ENCODE measurements at regions of chr3 and their contacts with region 1.

Region 1: DNA sequence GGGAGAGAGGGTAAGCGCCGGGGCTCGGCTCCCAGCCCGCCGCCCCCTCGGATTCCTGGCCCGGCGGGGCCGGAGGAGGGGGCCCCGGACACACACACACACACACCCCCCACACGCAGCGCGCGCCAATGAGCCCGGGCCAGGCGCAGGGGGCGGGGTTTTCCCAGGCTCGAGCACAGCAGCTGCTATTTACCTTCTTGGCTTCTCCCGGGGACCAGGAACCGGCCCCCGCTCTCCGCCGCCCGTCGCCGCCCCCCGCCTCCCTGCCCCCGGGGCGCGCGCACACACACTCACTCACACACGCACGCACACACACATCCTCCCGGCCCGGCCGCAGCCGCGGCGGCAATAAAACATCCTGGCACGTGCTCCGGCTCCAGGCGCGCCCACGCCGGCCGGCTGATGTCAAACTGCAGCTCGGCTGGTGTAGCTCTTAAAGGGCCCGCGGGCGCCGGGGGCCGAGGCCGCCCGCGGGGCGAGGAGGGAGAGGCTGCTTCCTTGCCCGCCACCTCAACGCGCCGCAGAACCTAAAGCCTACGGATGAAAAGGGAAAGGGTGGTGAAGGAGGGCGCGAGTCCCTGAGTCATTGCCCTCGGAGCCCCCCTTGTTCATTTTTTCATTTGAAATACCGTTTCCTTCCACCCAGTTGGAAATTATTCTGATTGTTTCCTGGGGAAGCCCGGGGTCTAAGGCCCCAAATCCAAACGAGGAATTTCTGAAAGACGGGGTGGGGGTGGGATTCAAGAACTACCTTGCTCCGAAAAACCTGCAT is 1.0 kb upstream of the HES1 start:
- DNase-seq: peak; percentile 95
- ATAC-seq: peak; percentile 66
- H3K4me3 ChIP-seq: peak overlapping the region; percentile 59
- H3K27ac ChIP-seq: peak overlapping the region; percentile 76
- H3K4me1 ChIP-seq: peaks cover 7% of the 10 kb centered on the region
- H3K27me3 ChIP-seq: peaks cover 17% of the 10 kb centered on the region
- CTCF ChIP-seq: no peak
- POLR2A ChIP-seq: peak; percentile 69
- RAD21 ChIP-seq: no peak; the same call in none of the 2 replicates

Region 2: GRCh38 chr3:193665370-193665989 is 469.5 kb before region 1 on chr3:
- CTCF ChIA-PET with region 1: interaction called, 3 read pairs
- POLR2A ChIA-PET with region 1: no interaction called
- dilution Hi-C with region 1: no loop called
- in situ Hi-C with region 1: no loop called
- intact Hi-C with region 1: loop called (anchors 5 kb)
- DNase-seq: peak; percentile 54
- ATAC-seq: no peak
- H3K4me3 ChIP-seq: no peak overlapping the region
- H3K27ac ChIP-seq: no peak overlapping the region
- H3K4me1 ChIP-seq: no peaks in the 10 kb centered on the region
- H3K27me3 ChIP-seq: no peaks in the 10 kb centered on the region
- CTCF ChIP-seq: peak; percentile 48
- POLR2A ChIP-seq: no peak
- RAD21 ChIP-seq: peak; percentile 35; the same call in 1 of the 2 replicates

Region 3: GRCh38 chr3:193780810-193781472 is 354.0 kb before region 1 on chr3:
- CTCF ChIA-PET with region 1: interaction called, 10 read pairs
- POLR2A ChIA-PET with region 1: no interaction called
- dilution Hi-C with region 1: no loop called
- in situ Hi-C with region 1: loop called (anchors 5 kb)
- intact Hi-C with region 1: loop called (anchors 2 kb)
- DNase-seq: peak; percentile 54
- ATAC-seq: peak; percentile 92
- H3K4me3 ChIP-seq: no peak overlapping the region
- H3K27ac ChIP-seq: no peak overlapping the region
- H3K4me1 ChIP-seq: no peaks in the 10 kb centered on the region
- H3K27me3 ChIP-seq: peaks cover 50% of the 10 kb centered on the region
- CTCF ChIP-seq: peak; percentile 81
- POLR2A ChIP-seq: no peak
- RAD21 ChIP-seq: peak; percentile 86

Region 4: GRCh38 chr3:193788189-193788991 is 346.6 kb before region 1 on chr3:
- CTCF ChIA-PET with region 1: interaction called, 6 read pairs
- POLR2A ChIA-PET with region 1: no interaction called
- dilution Hi-C with region 1: no loop called
- in situ Hi-C with region 1: loop called (anchors 5 kb)
- intact Hi-C with region 1: loop called (anchors 2 kb)
- DNase-seq: peak; percentile 53
- ATAC-seq: peak; percentile 95
- H3K4me3 ChIP-seq: no peak overlapping the region
- H3K27ac ChIP-seq: no peak overlapping the region
- H3K4me1 ChIP-seq: no peaks in the 10 kb centered on the region
- H3K27me3 ChIP-seq: peaks cover 46% of the 10 kb centered on the region
- CTCF ChIP-seq: peak; percentile 76
- POLR2A ChIP-seq: no peak
- RAD21 ChIP-seq: peak; percentile 93

Region 5: GRCh38 chr3:193869221-193870201 is 265.4 kb before region 1 on chr3:
- CTCF ChIA-PET with region 1: no interaction called
- POLR2A ChIA-PET with region 1: no interaction called
- dilution Hi-C with region 1: no loop called
- in situ Hi-C with region 1: no loop called
- intact Hi-C with region 1: loop called (anchors 5 kb)
- DNase-seq: peak; percentile 91
- ATAC-seq: peak; percentile 92
- H3K4me3 ChIP-seq: no peak overlapping the region
- H3K27ac ChIP-seq: peak overlapping the region; percentile 54
- H3K4me1 ChIP-seq: peaks cover 25% of the 10 kb centered on the region
- H3K27me3 ChIP-seq: no peaks in the 10 kb centered on the region
- CTCF ChIP-seq: no peak
- POLR2A ChIP-seq: no peak
- RAD21 ChIP-seq: peak; percentile 14

Region 6: DNA sequence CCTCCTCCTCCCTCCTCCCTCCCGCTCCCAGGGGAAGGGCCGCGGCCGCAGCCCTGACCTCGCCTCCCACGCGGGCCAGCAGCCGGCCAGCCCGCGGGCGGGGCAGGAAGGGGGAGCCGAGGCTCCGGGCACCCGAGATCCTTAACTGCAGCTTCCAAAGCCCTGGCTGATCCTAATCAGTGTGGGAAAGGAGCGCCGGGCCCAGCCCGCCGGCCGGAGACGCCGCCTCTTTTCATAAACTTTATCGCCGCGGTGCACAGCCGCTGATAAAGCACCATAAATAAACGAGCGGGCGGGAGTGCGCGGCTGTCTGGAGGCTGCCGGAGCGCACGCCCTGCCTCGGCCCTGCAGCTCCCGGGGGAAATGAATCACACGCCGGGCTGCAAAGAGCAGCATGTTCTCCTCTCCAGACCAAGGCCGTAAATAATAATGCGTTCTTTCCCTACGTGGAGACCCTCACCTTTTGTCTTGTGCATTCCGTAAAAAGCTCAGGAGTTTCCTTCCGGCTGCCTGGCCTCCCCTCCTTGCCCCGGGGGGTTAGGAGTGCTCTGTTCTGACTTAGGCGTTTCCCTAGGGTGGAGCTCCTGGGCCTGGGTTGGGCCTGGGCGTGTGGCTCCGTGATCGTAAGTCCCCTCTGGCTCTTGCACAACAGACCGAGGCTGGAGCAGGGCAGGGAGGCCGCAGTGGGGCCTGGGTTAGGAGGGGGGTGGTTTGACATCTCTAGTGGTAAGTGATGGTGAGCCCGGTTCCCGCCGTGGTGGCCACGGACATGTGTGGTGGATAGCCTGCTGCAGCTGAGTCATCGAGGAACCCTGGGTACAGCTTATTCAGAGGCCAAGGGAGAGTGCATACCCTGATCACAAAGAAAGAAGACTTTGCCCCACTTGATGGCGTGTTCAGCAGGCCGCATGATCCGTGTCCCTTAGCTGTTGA is 131.6 kb before region 1 on chr3:
- CTCF ChIA-PET with region 1: no interaction called
- POLR2A ChIA-PET with region 1: no interaction called
- dilution Hi-C with region 1: no loop called
- in situ Hi-C with region 1: no loop called
- intact Hi-C with region 1: loop called (anchors 1 kb)
- DNase-seq: peak; percentile 87
- ATAC-seq: peak; percentile 97
- H3K4me3 ChIP-seq: peak overlapping the region; percentile 34
- H3K27ac ChIP-seq: no peak overlapping the region
- H3K4me1 ChIP-seq: peaks cover 8% of the 10 kb centered on the region; the same call in 1 of the 2 replicates
- H3K27me3 ChIP-seq: peaks cover 29% of the 10 kb centered on the region
- CTCF ChIP-seq: no peak
- POLR2A ChIP-seq: no peak; the same call in 1 of the 2 replicates
- RAD21 ChIP-seq: peak; percentile 23

Region 7: DNA sequence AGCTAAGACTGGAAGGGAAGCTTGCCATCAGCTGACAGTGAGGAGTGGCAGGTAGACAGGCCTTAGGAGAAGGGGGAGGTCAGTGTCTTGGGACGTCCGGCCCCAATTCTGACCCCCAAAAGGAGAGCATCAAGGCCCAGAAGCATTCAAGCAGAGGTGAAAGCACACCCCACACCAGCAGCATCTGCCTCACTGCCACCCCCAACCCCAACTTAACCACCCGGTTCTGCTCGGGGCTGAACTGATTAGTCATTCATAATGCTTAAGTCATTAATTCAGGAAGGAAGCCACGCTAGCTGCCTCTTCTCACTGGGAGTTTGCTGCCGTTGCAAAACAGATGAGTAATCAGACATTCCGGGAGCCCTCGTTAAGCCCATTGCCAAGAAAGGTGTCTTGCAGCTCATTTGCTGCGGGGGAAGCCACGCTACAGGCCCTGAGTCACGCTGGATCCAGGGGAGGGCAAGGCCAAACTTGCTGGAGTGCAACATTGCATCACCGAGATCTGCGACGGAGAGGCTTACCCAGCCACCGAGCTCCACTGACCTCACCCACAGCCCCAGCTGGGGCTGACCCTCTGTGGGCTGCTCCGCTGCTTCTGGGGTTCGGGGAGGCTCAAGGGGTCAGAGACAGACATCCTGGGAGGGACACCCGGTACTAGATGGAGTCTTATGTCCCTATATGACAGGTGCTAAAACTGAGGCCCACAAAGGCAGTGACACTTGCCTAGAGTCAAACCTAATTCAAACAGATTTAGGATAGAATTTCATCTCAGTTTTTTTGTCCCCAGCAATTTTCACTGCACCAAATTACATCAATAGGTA is 45.4 kb before region 1 on chr3:
- CTCF ChIA-PET with region 1: no interaction called
- POLR2A ChIA-PET with region 1: no interaction called
- dilution Hi-C with region 1: no loop called
- in situ Hi-C with region 1: no loop called
- intact Hi-C with region 1: no loop called
- DNase-seq: peak; percentile 97
- ATAC-seq: peak; percentile 87
- H3K4me3 ChIP-seq: no peak overlapping the region
- H3K27ac ChIP-seq: peak overlapping the region; percentile 13; the same call in 1 of the 2 replicates
- H3K4me1 ChIP-seq: peaks cover 5% of the 10 kb centered on the region; the same call in 1 of the 2 replicates
- H3K27me3 ChIP-seq: peaks cover 9% of the 10 kb centered on the region
- CTCF ChIP-seq: no peak
- POLR2A ChIP-seq: peak; percentile 46; the same call in 1 of the 2 replicates
- RAD21 ChIP-seq: no peak

Region 8: GRCh38 chr3:194404365-194405140 is 269.6 kb after region 1 on chr3:
- CTCF ChIA-PET with region 1: no interaction called
- POLR2A ChIA-PET with region 1: no interaction called
- dilution Hi-C with region 1: no loop called
- in situ Hi-C with region 1: no loop called
- intact Hi-C with region 1: loop called (anchors 10 kb)
- DNase-seq: peak; percentile 58
- ATAC-seq: no peak
- H3K4me3 ChIP-seq: no peak overlapping the region
- H3K27ac ChIP-seq: no peak overlapping the region
- H3K4me1 ChIP-seq: peaks cover 6% of the 10 kb centered on the region
- H3K27me3 ChIP-seq: no peaks in the 10 kb centered on the region
- CTCF ChIP-seq: peak; percentile 74
- POLR2A ChIP-seq: no peak
- RAD21 ChIP-seq: peak; percentile 69

Measured in IMR-90 (cell line).